ENCODE measurements at regions of chr17 and their contacts with region 1.

Region 1: GRCh38 chr17:78144147-78144719 is 2.0 kb upstream of the C17orf99 start:
- DNase-seq: peak; percentile 93
- ATAC-seq: peak; percentile 68

Region 2: DNA sequence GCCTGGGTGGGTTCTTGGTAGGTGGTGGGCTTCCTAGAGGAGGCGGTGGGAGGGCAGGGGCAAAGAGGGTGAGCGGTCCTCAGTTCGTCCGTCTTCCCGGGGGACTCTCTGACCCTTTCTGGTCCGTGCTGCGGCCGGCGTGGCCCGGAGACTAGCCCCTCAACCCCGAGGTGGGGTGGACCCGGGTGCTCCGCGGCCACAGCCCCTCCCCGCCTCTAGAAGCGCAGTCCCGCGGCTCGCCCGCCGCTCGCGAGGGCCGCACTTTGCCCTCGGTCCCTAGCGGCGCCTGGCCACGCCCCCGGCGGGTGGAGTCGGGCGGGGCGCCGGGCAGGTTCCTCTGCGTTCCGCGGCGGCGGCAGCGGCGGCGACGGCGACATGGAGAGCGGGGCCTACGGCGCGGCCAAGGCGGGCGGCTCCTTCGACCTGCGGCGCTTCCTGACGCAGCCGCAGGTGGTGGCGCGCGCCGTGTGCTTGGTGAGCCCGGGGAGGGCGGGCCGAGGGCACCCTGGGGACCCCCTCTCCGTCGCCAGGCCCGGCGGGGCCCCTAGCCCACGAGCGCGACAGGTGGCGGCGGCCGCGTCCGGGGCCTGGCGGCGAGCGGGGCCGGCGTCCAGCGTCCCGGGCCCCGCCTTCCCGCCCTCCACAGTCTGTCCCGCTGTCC is 24.1 kb after region 1 on chr17 and contains the start of gene SYNGR2:
- intact Hi-C with region 1: loop called (anchors 2 kb)
- DNase-seq: peak; percentile 96
- ATAC-seq: peak; percentile 66
- total RNA-seq, gene SYNGR2: 120 TPM

Region 3: GRCh38 chr17:78341559-78342448 is 197.6 kb after region 1 on chr17:
- intact Hi-C with region 1: no loop called
- DNase-seq: peak; percentile 92
- ATAC-seq: peak; percentile 82